Body of pancreas (tissue), 4 donors: ENCODE measurements at regions of chr22 and their contacts with region 1.

Region 1: GRCh38 chr22:37199760-37200108 is 11.7 kb upstream of the C1QTNF6 start:
- DNase-seq: peak in 3 of 4 donors; percentile 46 to 54 (median 49)
- ATAC-seq: peak; percentile 0
- H3K4me3 ChIP-seq: no peak overlapping the region
- H3K27ac ChIP-seq: peak overlapping the region; percentile 54 to 91 (median 72)
- H3K4me1 ChIP-seq: peaks cover 31% of the 10 kb centered on the region
- H3K27me3 ChIP-seq: no peaks in the 10 kb centered on the region
- CTCF ChIP-seq: peak in 2 of 7 experiments; percentile 3
- POLR2A ChIP-seq: no peak

Region 2: GRCh38 chr22:37162221-37163095 is 37.3 kb before region 1 on chr22:
- intact Hi-C with region 1: loop called (anchors 5 kb)
- DNase-seq: no peak
- ATAC-seq: no peak
- H3K4me3 ChIP-seq: no peak overlapping the region
- H3K27ac ChIP-seq: no peak overlapping the region
- H3K4me1 ChIP-seq: peaks cover 3% of the 10 kb centered on the region
- H3K27me3 ChIP-seq: no peaks in the 10 kb centered on the region
- CTCF ChIP-seq: no peak
- POLR2A ChIP-seq: no peak

Region 3: DNA sequence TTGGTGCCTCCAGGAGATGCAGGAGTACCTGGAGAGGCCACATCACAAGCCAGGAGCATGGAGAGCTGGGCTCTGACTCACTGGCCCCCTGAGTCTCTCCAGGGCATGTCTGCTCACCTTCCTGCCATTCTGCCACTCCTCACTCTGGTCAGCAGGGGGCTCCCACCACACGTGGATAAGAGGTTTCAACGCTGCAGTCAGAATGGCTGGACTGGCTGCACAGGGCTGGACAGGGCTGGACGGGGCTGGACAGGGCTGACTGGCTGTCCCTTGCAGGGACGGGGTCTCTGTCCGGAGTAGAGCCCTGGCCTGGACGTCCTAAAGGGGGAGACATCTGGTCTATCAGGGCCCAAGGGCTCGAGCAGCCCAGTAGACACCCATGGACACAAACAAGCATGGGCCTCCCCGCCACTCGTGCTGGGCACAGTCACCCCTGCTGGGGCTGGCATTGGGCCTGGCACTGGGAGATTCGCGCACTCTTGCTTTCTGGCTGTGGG is 117.2 kb after region 1 on chr22:
- intact Hi-C with region 1: no loop called
- DNase-seq: peak; percentile 80 to 87 (median 84)
- ATAC-seq: peak; percentile 90
- H3K4me3 ChIP-seq: no peak overlapping the region
- H3K27ac ChIP-seq: no peak overlapping the region
- H3K4me1 ChIP-seq: no peaks in the 10 kb centered on the region
- H3K27me3 ChIP-seq: no peaks in the 10 kb centered on the region
- CTCF ChIP-seq: peak; percentile 82 to 97 (median 94)
- POLR2A ChIP-seq: no peak